ENCODE measurements at regions of chr10 and their contacts with region 1.

Region 1: DNA sequence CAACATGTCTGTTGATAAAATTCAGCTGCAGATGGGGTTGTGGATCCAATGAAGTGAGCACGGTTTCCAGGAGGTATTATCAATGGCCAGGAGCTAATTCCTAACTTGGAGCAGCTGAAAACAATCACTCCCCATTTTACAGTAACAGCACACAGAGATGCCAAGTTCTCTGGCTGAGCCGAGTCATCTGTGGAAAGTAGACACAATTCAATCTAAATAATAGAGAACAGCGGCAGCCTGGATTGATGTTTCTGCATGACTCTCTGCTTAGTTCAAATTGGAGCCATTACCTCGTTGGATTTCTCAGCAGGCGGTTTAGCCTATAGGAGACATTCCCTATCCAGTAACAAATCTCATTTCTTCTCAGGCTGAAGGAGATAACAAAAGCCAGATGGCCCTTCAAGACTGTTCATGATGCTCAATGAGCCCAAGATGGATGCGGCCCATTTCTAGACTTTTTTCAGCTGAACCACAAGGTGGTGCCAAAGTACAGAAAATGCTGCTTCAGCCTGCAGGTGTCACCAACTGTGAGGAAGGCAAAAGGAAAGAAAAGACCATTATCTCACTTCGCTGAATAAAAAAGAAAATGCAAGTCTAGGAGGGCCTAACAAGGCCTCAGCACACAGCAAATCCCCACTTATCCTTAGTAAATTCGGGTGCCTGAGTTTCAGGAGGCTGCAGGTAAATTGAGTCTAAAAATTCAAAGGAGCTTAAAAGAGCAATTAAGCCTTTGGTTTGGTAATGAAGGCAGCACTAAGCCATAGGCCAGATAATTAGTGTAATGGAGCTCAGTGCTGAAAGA is 83.7 kb downstream of the SLC16A9 start:
- DNase-seq: peak; percentile 51
- ATAC-seq: peak; percentile 83
- H3K4me3 ChIP-seq: no peak overlapping the region
- H3K27ac ChIP-seq: no peak overlapping the region
- H3K4me1 ChIP-seq: no peaks in the 10 kb centered on the region
- H3K27me3 ChIP-seq: no peaks in the 10 kb centered on the region; a peak in 1 of 5 replicates
- CTCF ChIP-seq: peak; percentile 92
- EP300 ChIP-seq: no peak
- POLR2A ChIP-seq: no peak
- RAD21 ChIP-seq: peak; percentile 85

Region 2: GRCh38 chr10:58892031-58892531 is 733.8 kb before region 1 on chr10:
- CTCF ChIA-PET with region 1: no interaction called
- POLR2A ChIA-PET with region 1: no interaction called
- in situ Hi-C with region 1: no loop called
- intact Hi-C with region 1: loop called (anchors 5 kb)
- DNase-seq: no peak
- ATAC-seq: no peak
- H3K4me3 ChIP-seq: no peak overlapping the region
- H3K27ac ChIP-seq: no peak overlapping the region
- H3K4me1 ChIP-seq: peaks cover 25% of the 10 kb centered on the region
- H3K27me3 ChIP-seq: no peaks in the 10 kb centered on the region; a peak in 1 of 5 replicates
- CTCF ChIP-seq: no peak
- EP300 ChIP-seq: no peak
- POLR2A ChIP-seq: no peak
- RAD21 ChIP-seq: no peak

Region 3: GRCh38 chr10:59648711-59649201 is 22.8 kb after region 1 on chr10:
- CTCF ChIA-PET with region 1: no interaction called
- POLR2A ChIA-PET with region 1: no interaction called
- in situ Hi-C with region 1: no loop called
- intact Hi-C with region 1: no loop called
- DNase-seq: no peak
- ATAC-seq: no peak
- H3K4me3 ChIP-seq: no peak overlapping the region
- H3K27ac ChIP-seq: no peak overlapping the region
- H3K4me1 ChIP-seq: no peaks in the 10 kb centered on the region
- H3K27me3 ChIP-seq: no peaks in the 10 kb centered on the region
- CTCF ChIP-seq: no peak
- EP300 ChIP-seq: no peak
- POLR2A ChIP-seq: no peak
- RAD21 ChIP-seq: no peak

Region 4: DNA sequence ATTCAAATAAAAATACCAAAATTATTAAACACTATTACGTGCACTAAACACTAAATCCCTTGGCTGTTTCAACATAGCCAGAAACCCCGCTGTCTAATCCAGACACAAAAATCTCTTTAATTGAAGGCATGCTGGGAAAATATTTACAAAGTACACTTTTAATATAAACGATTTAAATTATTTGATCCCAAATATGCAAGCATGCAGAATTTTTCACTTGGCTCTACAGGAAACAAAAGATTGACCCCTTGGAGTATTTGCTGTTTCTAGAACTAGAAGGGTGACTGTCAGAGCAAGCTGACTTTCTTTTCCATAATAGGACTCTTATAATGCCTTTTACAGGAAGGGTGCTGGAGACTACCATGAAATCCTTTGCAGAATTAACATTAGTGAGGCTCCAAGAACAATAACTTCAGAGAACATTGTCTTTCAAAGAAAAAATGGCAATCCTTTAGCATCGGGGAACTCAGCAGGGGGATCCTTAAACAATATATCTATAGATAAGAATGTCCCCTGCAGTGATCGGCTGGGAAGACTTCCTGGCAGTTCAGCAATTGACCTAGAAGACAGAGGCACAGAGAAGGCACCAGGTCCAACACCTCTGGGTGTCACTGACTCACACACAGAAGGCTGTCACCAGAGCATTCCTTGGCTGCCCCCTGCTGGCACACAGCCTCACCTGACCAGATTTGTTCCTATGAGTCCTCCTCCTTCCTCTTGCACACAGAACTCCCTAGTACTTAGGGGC is 183.1 kb after region 1 on chr10:
- CTCF ChIA-PET with region 1: interaction called, 35 read pairs
- POLR2A ChIA-PET with region 1: no interaction called
- in situ Hi-C with region 1: loop called (anchors 5 kb)
- intact Hi-C with region 1: loop called (anchors 1 kb)
- DNase-seq: peak; percentile 64
- ATAC-seq: peak; percentile 98
- H3K4me3 ChIP-seq: no peak overlapping the region
- H3K27ac ChIP-seq: no peak overlapping the region
- H3K4me1 ChIP-seq: no peaks in the 10 kb centered on the region
- H3K27me3 ChIP-seq: no peaks in the 10 kb centered on the region
- CTCF ChIP-seq: peak; percentile 90
- EP300 ChIP-seq: no peak
- POLR2A ChIP-seq: no peak
- RAD21 ChIP-seq: peak; percentile 67

Region 5: GRCh38 chr10:59906417-59907202 is 280.7 kb after region 1 on chr10 and contains the start of gene CCDC6:
- CTCF ChIA-PET with region 1: no interaction called
- POLR2A ChIA-PET with region 1: no interaction called
- in situ Hi-C with region 1: no loop called
- intact Hi-C with region 1: loop called (anchors 1 kb)
- DNase-seq: peak; percentile 86
- ATAC-seq: peak; percentile 93
- H3K4me3 ChIP-seq: peak within 1 kb of the TSS; percentile 94 to 100 (median 97)
- H3K27ac ChIP-seq: peak within 1 kb of the TSS; percentile 90
- H3K4me1 ChIP-seq: peaks cover 53% of the 10 kb centered on the region
- H3K27me3 ChIP-seq: no peaks in the 10 kb centered on the region; a peak in 1 of 5 replicates
- CTCF ChIP-seq: peak; percentile 87
- EP300 ChIP-seq: no peak
- POLR2A ChIP-seq: peak; percentile 78 to 81
- RAD21 ChIP-seq: peak; percentile 77
- total RNA-seq, gene CCDC6: 18.3 and 34.1 TPM in 2 replicates

Region 6: DNA sequence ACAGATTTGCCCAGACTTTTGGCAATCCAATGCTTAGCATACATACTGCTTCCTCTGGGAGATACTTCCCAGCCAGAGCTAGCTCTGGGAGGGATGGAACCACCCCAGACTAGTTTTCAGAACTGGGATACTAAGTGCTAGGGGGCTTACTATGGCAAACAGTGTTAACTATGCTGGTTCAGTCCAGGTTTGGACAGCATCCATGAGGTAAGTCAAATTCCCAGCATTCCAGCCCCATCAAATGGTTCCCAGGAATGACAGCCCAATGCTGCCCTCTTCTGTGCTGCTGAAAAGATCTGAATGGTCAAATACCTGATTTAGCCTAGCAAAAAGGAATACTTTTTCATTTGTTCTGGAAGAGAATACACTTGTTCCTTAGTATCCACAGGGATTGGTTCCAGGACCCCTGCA is 422.2 kb after region 1 on chr10:
- CTCF ChIA-PET with region 1: no interaction called
- POLR2A ChIA-PET with region 1: no interaction called
- in situ Hi-C with region 1: no loop called
- intact Hi-C with region 1: loop called (anchors 1 kb)
- DNase-seq: peak; percentile 39
- ATAC-seq: peak; percentile 83
- H3K4me3 ChIP-seq: no peak overlapping the region
- H3K27ac ChIP-seq: no peak overlapping the region
- H3K4me1 ChIP-seq: no peaks in the 10 kb centered on the region
- H3K27me3 ChIP-seq: no peaks in the 10 kb centered on the region
- CTCF ChIP-seq: peak; percentile 61
- EP300 ChIP-seq: no peak
- POLR2A ChIP-seq: no peak
- RAD21 ChIP-seq: 0 out of 2 replicates have a peak, but pooled peaks have one; percentile 17

Region 7: GRCh38 chr10:60434418-60435046 is 808.6 kb after region 1 on chr10:
- CTCF ChIA-PET with region 1: no interaction called
- POLR2A ChIA-PET with region 1: no interaction called
- in situ Hi-C with region 1: no loop called
- intact Hi-C with region 1: loop called (anchors 5 kb)
- DNase-seq: peak; percentile 35
- ATAC-seq: peak; percentile 70
- H3K4me3 ChIP-seq: no peak overlapping the region
- H3K27ac ChIP-seq: no peak overlapping the region
- H3K4me1 ChIP-seq: no peaks in the 10 kb centered on the region
- H3K27me3 ChIP-seq: no peaks in the 10 kb centered on the region
- CTCF ChIP-seq: peak; percentile 73
- EP300 ChIP-seq: no peak
- POLR2A ChIP-seq: no peak
- RAD21 ChIP-seq: peak; percentile 66; the same call in 1 of the 2 replicates